CD4-positive, alpha-beta T cell (primary cell): ENCODE measurements at regions of chr10 and their contacts with region 1.

Region 1: DNA sequence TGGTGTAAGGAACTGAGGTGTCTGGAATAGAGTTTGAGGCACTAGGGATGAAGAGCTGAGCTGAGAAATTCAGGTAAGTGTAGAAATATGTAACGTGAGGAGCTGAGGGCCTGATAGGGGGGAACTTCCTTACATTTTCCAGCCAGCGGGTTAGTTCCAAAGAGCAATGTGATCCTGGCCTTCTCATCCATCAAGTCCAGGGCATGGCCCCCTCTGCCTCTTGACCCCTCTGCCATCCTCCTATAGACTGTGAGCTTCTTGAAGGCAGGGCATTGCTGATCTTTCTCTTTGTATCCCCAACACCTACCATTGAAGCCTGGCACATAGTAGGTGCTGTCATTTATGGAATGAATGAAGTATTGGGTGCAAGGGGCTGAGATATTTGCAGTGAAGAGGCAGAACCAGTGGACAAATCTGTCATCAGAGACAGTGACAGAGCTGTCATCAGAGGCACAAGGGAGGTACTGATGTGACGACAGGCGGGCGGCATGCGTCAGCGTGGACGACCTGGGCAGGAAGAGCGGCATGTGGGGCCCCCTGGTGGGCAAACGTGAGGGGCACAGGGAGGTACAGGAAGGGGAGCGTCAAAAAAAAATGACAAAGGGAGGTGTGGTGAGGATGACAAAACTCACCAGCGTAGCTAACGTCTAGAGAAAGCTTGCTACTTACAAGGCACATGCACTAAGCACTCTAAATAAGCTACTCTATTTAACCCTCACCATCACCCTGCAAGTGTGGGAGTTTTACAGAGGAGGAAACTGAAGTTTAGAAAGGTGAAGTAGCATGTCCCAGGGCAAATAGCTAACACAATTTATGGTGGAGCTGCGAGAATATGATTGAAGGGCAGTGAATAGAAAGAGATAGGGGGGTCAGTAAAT is 5.2 kb upstream of the CAMK2G start:
- DNase-seq: peak; percentile 90 to 98 (median 94)
- ATAC-seq: peak; percentile 89
- H3K4me3 ChIP-seq: no peak overlapping the region
- H3K4me3 Mint-ChIP-seq: peak overlapping the region; percentile 15
- H3K27ac ChIP-seq: peak overlapping the region in 1 of 2 donors; percentile 33
- H3K27ac Mint-ChIP-seq: peak overlapping the region; percentile 72
- H3K4me1 ChIP-seq: peaks cover 37% of the 10 kb centered on the region
- H3K4me1 Mint-ChIP-seq: peaks cover 24% of the 10 kb centered on the region
- H3K27me3 ChIP-seq: no peaks in the 10 kb centered on the region
- H3K27me3 Mint-ChIP-seq: no peaks in the 10 kb centered on the region
- CTCF ChIP-seq: peak; percentile 92

Region 2: DNA sequence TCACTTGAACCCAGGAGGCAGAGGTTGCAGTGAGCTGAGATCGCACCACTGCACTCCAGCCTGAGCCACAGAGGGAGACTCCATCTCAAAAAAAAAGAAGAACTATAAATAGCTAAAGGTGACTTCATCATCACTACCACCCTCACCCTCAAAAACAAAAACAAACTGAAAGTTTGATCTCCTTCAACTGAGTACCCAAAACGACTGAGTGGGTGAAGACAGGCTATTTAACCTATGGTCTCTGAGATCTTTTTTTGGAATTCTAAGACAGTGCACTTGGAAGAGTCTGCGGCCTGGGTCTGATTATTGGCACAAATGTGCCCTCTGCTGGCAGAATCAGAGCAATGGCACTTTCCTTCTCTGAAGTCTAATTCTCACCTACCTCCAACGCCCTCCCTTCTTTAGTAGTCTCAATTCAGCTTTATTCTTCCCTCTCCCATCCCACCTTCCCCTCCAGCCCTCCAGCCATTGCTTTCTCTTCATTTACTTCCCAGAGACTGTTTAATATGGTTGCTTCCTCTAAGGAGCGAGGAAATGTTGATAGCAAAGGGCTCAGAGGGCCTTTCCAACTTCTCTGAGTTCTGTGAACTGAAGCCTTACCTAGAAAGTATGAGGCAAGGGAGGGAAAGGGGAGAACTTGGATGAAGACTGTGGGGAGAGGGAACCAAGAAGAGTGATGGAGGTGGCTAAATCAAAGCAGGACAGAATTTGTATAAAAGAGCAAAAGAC is 235.4 kb before region 1 on chr10:
- CTCF ChIA-PET with region 1: no interaction called
- POLR2A ChIA-PET with region 1: no interaction called
- intact Hi-C with region 1: no loop called
- DNase-seq: peak; percentile 23 to 81 (median 36)
- ATAC-seq: peak; percentile 81
- H3K4me3 ChIP-seq: no peak overlapping the region
- H3K4me3 Mint-ChIP-seq: peak overlapping the region; percentile 16
- H3K27ac ChIP-seq: no peak overlapping the region
- H3K27ac Mint-ChIP-seq: no peak overlapping the region
- H3K4me1 ChIP-seq: peaks cover 23% of the 10 kb centered on the region
- H3K4me1 Mint-ChIP-seq: peaks cover 5% of the 10 kb centered on the region
- H3K27me3 ChIP-seq: peaks cover 0 to 6% of the 10 kb centered on the region in 2 experiments
- H3K27me3 Mint-ChIP-seq: peaks cover 17% of the 10 kb centered on the region
- CTCF ChIP-seq: peak; percentile 96

Region 3: GRCh38 chr10:73810735-73811465 is 68.6 kb before region 1 on chr10:
- CTCF ChIA-PET with region 1: interaction called, 6 read pairs
- POLR2A ChIA-PET with region 1: interaction called, 6 read pairs
- intact Hi-C with region 1: loop called in 1 of 2 experiments (anchors 2 kb)
- DNase-seq: peak in 13 of 14 experiments; percentile 40 to 80 (median 65)
- ATAC-seq: peak; percentile 17
- H3K4me3 ChIP-seq: peak overlapping the region; percentile 70
- H3K4me3 Mint-ChIP-seq: peak overlapping the region; percentile 97
- H3K27ac ChIP-seq: peak overlapping the region; percentile 55 to 91
- H3K27ac Mint-ChIP-seq: peak overlapping the region; percentile 99
- H3K4me1 ChIP-seq: peaks cover 53% of the 10 kb centered on the region
- H3K4me1 Mint-ChIP-seq: peaks cover 52% of the 10 kb centered on the region
- H3K27me3 ChIP-seq: no peaks in the 10 kb centered on the region
- H3K27me3 Mint-ChIP-seq: no peaks in the 10 kb centered on the region
- CTCF ChIP-seq: no peak

Region 4: DNA sequence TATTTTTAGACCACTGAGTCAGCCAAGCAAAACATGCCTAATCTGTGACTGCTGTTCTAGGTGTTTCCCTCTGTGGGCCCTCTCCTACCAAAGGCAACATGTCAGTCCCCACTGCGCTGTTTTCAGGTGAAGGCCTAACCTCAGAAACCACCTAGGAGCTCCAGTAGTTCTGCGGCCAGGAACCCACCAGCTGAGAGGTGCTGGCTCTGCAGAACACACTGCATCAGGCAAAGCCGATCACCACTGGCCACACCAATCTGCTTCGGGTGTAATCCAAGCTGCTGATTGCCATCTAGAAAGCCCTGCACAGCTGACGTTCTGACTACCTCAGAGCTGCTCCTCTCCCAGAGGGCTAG is 20.1 kb before region 1 on chr10:
- CTCF ChIA-PET with region 1: interaction called, 25 read pairs
- POLR2A ChIA-PET with region 1: interaction called, 51 read pairs
- intact Hi-C with region 1: no loop called
- DNase-seq: peak in 9 of 14 experiments; percentile 19 to 76 (median 39)
- ATAC-seq: peak; percentile 77
- H3K4me3 ChIP-seq: no peak overlapping the region
- H3K4me3 Mint-ChIP-seq: peak overlapping the region; percentile 42
- H3K27ac ChIP-seq: peak overlapping the region; percentile 49 to 61
- H3K27ac Mint-ChIP-seq: peak overlapping the region; percentile 85
- H3K4me1 ChIP-seq: peaks cover 85% of the 10 kb centered on the region
- H3K4me1 Mint-ChIP-seq: peaks cover 82% of the 10 kb centered on the region
- H3K27me3 ChIP-seq: no peaks in the 10 kb centered on the region
- H3K27me3 Mint-ChIP-seq: no peaks in the 10 kb centered on the region
- CTCF ChIP-seq: no peak

Region 5: GRCh38 chr10:73931767-73932619 is 52.5 kb after region 1 on chr10:
- CTCF ChIA-PET with region 1: interaction called, 11 read pairs
- POLR2A ChIA-PET with region 1: interaction called, 4 read pairs
- intact Hi-C with region 1: no loop called
- DNase-seq: peak in 13 of 14 experiments; percentile 25 to 81 (median 52)
- ATAC-seq: peak; percentile 95
- H3K4me3 ChIP-seq: no peak overlapping the region
- H3K4me3 Mint-ChIP-seq: no peak overlapping the region
- H3K27ac ChIP-seq: no peak overlapping the region
- H3K27ac Mint-ChIP-seq: no peak overlapping the region
- H3K4me1 ChIP-seq: peaks cover 13% of the 10 kb centered on the region
- H3K4me1 Mint-ChIP-seq: peaks cover 13% of the 10 kb centered on the region
- H3K27me3 ChIP-seq: peaks cover 0 to 3% of the 10 kb centered on the region in 2 experiments
- H3K27me3 Mint-ChIP-seq: peaks cover 18% of the 10 kb centered on the region
- CTCF ChIP-seq: no peak

Region 6: DNA sequence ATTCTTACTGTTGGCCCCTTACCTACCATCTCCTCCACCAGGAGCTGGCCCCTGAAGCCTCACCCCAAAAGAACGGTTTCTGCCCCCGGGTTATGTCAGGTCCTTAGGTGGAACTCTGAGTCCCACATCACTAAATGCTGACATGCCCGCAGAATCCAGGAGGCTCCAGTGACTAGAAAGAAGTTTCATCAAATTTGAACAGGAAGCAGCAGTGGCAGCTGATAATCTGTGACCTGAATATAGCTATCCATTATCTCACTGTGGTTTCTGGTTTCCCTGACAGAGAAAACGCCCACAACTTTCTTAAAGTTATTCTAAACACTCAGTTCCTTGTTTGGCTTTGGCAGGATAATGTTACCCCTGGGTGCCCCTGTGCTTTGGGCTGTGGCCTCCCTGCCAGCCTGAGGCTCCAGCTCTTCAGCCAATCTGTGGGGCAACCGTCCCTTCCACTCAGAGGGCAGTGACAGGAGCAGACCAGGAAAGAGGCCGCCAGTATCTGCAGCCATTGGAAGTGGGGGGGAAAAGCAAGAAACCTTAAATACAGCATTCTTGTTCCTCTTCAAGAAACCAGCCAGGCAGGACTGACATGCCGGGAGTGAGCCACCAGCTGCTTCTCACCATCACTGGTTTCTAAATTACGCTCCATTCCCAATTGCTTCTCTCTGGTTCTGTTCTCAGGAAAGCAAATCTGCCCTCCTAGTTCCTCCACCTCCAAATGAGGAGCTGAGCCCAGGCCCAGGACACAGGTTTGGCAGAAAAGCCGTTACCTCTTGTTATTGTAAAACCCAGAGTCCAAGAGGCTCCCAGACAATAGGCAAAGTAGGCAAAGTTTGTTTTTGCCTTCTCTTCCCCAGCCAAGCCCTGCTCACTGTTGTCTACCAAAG is 77.2 kb after region 1 on chr10:
- CTCF ChIA-PET with region 1: interaction called, 6 read pairs
- POLR2A ChIA-PET with region 1: interaction called, 9 read pairs
- intact Hi-C with region 1: loop called in 1 of 2 experiments (anchors 5 kb)
- DNase-seq: peak in 6 of 14 experiments; percentile 12 to 91 (median 54)
- ATAC-seq: peak; percentile 78
- H3K4me3 ChIP-seq: peak overlapping the region; percentile 19
- H3K4me3 Mint-ChIP-seq: peak overlapping the region; percentile 69
- H3K27ac ChIP-seq: peak overlapping the region; percentile 57 to 62
- H3K27ac Mint-ChIP-seq: peak overlapping the region; percentile 92
- H3K4me1 ChIP-seq: peaks cover 63% of the 10 kb centered on the region
- H3K4me1 Mint-ChIP-seq: peaks cover 58% of the 10 kb centered on the region
- H3K27me3 ChIP-seq: no peaks in the 10 kb centered on the region
- H3K27me3 Mint-ChIP-seq: no peaks in the 10 kb centered on the region
- CTCF ChIP-seq: no peak

Region 7: GRCh38 chr10:74018241-74018640 is 138.7 kb after region 1 on chr10:
- CTCF ChIA-PET with region 1: no interaction called
- POLR2A ChIA-PET with region 1: no interaction called
- intact Hi-C with region 1: no loop called
- DNase-seq: no peak
- ATAC-seq: no peak
- H3K4me3 ChIP-seq: no peak overlapping the region
- H3K4me3 Mint-ChIP-seq: no peak overlapping the region
- H3K27ac ChIP-seq: no peak overlapping the region
- H3K27ac Mint-ChIP-seq: no peak overlapping the region
- H3K4me1 ChIP-seq: peaks cover 3% of the 10 kb centered on the region
- H3K4me1 Mint-ChIP-seq: peaks cover 38% of the 10 kb centered on the region
- H3K27me3 ChIP-seq: no peaks in the 10 kb centered on the region
- H3K27me3 Mint-ChIP-seq: no peaks in the 10 kb centered on the region
- CTCF ChIP-seq: no peak

Region 8: GRCh38 chr10:75235375-75236177 is 1356.0 kb after region 1 on chr10 and contains the start of gene COMTD1:
- CTCF ChIA-PET with region 1: no interaction called
- POLR2A ChIA-PET with region 1: no interaction called
- intact Hi-C with region 1: loop called in 1 of 2 experiments (anchors 10 kb)
- DNase-seq: peak; percentile 87 to 96 (median 92)
- ATAC-seq: peak; percentile 64
- H3K4me3 ChIP-seq: peak within 1 kb of the TSS; percentile 80
- H3K4me3 Mint-ChIP-seq: peak within 1 kb of the TSS; percentile 88
- H3K27ac ChIP-seq: peak within 1 kb of the TSS; percentile 47 to 66
- H3K27ac Mint-ChIP-seq: peak within 1 kb of the TSS; percentile 90
- H3K4me1 ChIP-seq: peaks cover 28% of the 10 kb centered on the region
- H3K4me1 Mint-ChIP-seq: peaks cover 29% of the 10 kb centered on the region
- H3K27me3 ChIP-seq: no peaks in the 10 kb centered on the region
- H3K27me3 Mint-ChIP-seq: no peaks in the 10 kb centered on the region
- CTCF ChIP-seq: peak; percentile 100
- total RNA-seq, gene COMTD1: 9.5 to 10.5 TPM